GM18951 (cell line): ENCODE measurements at regions of chr1 and their contacts with region 1.

Region 1: DNA sequence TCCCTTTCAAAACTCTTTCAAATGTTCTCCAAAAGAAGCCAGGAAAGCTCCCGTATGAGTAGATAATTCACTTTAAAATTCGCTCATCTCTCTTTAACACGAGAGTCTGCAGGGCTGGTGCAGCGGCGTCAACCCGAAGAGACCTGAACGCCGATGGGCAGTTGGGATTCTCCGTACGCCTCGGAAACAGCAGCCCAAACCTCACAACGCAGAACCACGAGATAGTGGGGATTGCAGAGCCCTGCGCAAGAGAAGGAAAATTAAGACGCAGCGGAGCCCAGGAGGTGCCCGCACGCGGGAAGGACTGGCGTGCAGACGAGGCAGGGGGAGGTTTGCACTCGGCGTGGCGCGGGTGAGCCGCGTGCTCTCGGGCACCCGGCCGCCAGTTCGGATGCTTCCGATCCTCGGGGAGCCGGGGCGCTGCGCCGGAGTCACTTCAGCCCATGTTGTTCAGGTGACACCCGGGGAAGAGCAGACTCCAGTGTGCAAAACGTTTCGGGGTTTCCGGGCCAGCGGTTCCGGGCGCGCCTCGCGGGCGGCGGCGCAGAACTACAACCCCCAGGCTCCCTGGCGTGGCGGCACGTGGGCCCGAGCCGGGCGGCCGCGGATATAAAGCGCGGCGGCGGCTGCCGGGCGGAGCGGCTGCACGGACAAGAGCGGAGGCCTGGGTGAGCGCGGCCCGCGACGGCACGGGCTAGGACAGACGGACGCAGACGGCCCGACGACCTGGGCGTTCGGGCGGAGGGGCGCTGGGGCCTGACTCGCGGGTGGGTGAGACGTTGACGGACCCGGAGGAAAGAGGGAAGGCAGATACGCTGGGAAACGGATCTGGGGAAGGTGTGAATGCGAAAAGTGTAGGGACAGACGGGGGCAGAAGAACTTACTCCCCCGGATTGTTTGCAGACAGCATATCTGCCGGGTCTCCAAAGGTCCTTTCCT is at the start of gene NPL:
- POLR2A ChIP-seq: peak; percentile 89

Region 2: DNA sequence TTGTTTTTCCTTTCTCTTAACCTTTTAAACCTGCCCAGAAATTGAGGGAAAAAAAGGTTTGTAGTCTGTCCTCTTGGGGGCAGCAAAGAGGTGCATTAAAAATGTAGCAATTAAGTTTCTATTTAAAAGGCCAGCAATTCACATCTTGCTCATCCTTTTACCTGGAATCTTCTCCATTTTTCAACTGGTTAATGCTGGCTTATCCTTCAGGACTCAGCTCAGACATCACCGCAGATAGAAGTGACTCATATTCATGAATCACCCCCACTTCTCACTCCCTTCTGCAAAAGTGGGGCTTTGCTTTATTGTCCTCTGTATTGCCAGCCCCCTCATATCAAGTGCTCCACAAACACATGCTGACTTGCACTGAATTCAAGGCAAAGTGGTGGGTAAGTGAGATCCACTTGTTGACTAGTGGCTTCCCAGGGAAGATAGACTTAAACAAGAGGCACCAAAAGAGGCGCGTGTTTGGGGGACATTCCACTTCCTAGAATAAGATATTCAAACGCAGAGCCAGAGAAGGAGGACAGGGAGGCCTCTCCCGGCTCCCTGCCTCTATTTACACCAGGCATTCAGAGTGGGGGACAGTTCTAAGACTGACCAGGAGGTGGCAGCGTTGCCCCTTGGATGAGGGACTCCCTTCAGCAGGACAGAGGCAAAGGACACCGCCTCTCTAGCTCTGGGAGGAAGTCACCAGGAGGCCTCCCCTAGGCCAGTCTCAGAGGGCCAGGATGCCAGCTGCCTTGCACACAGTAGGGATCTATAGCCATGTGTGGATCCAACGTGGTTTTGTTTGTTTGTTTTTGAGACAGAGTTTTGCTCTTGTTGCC is 704.7 kb before region 1 on chr1:
- in situ Hi-C with region 1: loop called (anchors 10 kb)
- POLR2A ChIP-seq: no peak

Region 3: DNA sequence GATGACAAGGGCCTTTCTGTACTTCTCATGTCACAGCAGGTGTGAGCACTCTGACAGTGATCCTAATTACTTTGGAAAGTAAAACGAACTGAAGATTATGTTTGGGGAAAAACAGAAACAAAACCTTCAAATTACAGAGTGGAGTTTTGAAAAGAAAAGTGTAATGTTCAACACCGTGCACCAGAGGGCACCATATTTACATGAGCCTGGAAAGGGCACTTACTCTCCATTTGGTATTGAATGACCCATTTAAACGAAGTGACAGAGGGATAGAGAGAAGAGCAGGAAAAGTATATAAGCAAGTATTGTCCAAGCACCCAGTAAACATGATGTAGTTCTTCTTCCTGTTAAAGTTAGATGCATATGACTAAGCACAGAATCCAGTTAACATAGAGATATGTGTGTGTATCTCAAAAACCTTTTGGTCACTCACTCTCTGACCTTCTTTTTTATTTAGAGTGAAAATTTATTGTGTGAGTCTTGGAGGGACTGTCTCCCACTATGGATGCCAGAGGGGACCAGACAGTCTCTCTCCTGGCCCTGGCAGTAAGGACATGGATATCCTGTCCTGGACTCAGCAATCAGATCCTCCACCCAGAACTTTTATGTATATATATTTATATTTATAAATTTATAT is 343.3 kb before region 1 on chr1:
- in situ Hi-C with region 1: loop called (anchors 10 kb)
- POLR2A ChIP-seq: no peak

Region 4: GRCh38 chr1:182752077-182752988 is 37.1 kb before region 1 on chr1:
- in situ Hi-C with region 1: no loop called
- POLR2A ChIP-seq: no peak

Region 5: GRCh38 chr1:182897696-182898095 is 108.3 kb after region 1 on chr1:
- in situ Hi-C with region 1: no loop called
- POLR2A ChIP-seq: no peak